ENCODE measurements at regions of chr7 and their contacts with region 1.

Region 1: GRCh38 chr7:5248201-5248885 is 34.4 kb upstream of the SLC29A4 start:
- DNase-seq: peak; percentile 75 to 92 (median 91)
- ATAC-seq: peak; percentile 84 to 89
- H3K4me3 ChIP-seq: no peak overlapping the region
- H3K27ac ChIP-seq: no peak overlapping the region
- H3K4me1 ChIP-seq: no peaks in the 10 kb centered on the region
- H3K27me3 ChIP-seq: no peaks in the 10 kb centered on the region

Region 2: GRCh38 chr7:5117095-5117970 is 131.0 kb before region 1 on chr7:
- intact Hi-C with region 1: no loop called
- DNase-seq: no peak
- ATAC-seq: peak; percentile 18 to 29
- H3K4me3 ChIP-seq: no peak overlapping the region
- H3K27ac ChIP-seq: no peak overlapping the region
- H3K4me1 ChIP-seq: no peaks in the 10 kb centered on the region
- H3K27me3 ChIP-seq: no peaks in the 10 kb centered on the region

Region 3: DNA sequence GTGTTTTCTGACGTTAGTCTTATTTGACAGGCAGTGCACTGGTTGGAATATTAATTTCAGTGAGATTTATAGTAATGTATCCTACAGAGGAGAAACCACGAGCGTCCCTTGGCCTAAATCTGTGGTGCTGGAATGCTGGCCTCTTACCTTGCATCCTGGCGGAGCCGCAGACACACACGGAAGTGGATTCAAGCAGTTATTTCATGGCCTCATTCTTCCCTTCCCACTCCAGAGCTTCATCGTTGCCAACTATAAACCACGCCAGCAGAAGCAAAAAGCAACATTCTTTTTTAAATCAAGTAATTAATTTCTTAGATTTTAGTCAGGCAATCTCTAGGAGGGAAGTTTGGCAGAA is 45.2 kb before region 1 on chr7:
- intact Hi-C with region 1: no loop called
- DNase-seq: no peak
- ATAC-seq: no peak
- H3K4me3 ChIP-seq: no peak overlapping the region
- H3K27ac ChIP-seq: no peak overlapping the region
- H3K4me1 ChIP-seq: peaks cover 3% of the 10 kb centered on the region
- H3K27me3 ChIP-seq: no peaks in the 10 kb centered on the region

Region 4: DNA sequence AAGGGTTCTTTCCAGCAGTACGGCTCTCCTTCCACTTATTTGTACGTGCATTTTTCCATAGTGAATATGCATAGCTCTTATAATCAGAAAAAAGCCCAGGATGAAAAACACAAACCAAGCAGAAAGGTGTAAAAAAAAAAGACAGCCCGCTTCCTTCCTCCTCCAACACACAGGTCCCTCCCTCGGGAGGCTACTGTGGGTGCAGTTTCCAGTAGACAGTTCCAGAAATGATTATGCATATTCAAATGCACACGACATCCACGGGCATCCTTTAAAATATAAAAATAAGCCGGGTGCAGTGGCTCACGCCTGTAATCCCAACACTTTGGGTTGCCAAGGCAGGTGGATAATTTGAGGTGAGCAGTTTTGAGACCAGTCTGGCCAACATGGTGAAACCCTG is 115.4 kb after region 1 on chr7:
- intact Hi-C with region 1: loop called in 1 of 4 experiments (anchors 10 kb)
- DNase-seq: peak in 1 of 3 donors; percentile 3
- ATAC-seq: no peak
- H3K4me3 ChIP-seq: no peak overlapping the region
- H3K27ac ChIP-seq: no peak overlapping the region
- H3K4me1 ChIP-seq: no peaks in the 10 kb centered on the region
- H3K27me3 ChIP-seq: no peaks in the 10 kb centered on the region